MCF 10A (cell line): ENCODE measurements at regions of chrX and their contacts with region 1.

Region 1: DNA sequence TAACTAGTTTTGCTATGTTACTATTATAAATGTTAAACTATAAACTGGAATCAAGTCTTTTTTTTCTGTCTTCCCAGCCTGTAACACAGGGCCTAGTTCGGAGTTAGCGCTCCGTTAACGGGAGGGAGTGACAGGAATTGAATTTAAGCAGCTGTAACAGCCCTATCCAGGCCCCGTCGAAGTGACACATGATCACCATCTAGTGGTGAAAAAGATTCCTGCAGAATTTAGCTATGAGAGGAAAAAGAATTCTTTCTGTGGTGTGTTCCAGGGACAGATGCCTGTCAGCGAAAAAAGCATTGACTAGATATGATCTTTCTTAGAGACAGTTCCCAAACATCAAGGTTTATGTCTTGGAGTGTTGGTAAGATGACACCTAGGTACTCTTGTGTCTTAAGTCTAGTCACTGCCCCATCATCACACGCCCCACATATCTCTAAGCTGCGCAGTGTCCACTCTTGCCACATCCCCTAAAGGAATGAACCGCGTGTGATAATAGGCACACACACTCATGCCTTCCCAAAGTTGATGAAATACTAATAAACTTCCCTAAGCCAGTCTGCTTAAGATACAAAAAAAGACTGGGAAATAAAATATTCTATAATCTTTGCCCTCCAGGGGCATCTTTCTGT is 2.0 kb downstream of the GAB3 start:
- DNase-seq: peak; percentile 79
- H3K4me3 Mint-ChIP-seq: no peak overlapping the region
- H3K27ac Mint-ChIP-seq: no peak overlapping the region
- H3K4me1 Mint-ChIP-seq: no peaks in the 10 kb centered on the region
- H3K27me3 Mint-ChIP-seq: peaks cover 14% of the 10 kb centered on the region
- CTCF ChIP-seq: peak; percentile 77

Region 2: GRCh38 chrX:154714925-154715324 is 33.9 kb before region 1 on chrX:
- CTCF ChIA-PET with region 1: interaction called, 31 read pairs
- POLR2A ChIA-PET with region 1: interaction called, 24 read pairs
- intact Hi-C with region 1: loop called (anchors 1 kb)
- DNase-seq: peak; percentile 80
- H3K4me3 Mint-ChIP-seq: no peak overlapping the region
- H3K27ac Mint-ChIP-seq: no peak overlapping the region
- H3K4me1 Mint-ChIP-seq: peaks cover 42% of the 10 kb centered on the region
- H3K27me3 Mint-ChIP-seq: no peaks in the 10 kb centered on the region
- CTCF ChIP-seq: peak; percentile 79

Region 3: DNA sequence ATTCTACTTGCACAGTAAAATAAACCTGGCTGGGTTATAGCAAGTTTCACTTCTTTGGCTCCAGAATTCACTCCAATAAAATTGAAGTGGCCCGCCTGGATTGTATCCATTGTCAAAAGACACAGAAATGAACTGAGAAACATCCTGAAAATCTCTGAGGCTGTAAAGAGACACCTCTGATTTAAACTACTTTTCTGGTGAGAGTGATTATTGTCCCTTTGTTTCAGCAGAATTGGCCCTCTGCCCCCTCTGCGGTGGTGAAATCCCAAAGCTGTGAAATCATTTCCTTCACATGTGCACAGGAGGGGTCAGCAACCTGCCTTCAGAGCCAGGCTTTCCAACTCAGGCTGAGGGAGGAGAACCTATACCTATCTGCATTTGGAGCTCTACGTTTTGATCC is 21.0 kb before region 1 on chrX:
- CTCF ChIA-PET with region 1: interaction called, 62 read pairs
- POLR2A ChIA-PET with region 1: interaction called, 37 read pairs
- intact Hi-C with region 1: loop called (anchors 1 kb)
- DNase-seq: peak; percentile 90
- H3K4me3 Mint-ChIP-seq: peak overlapping the region; percentile 32
- H3K27ac Mint-ChIP-seq: peak overlapping the region; percentile 83
- H3K4me1 Mint-ChIP-seq: peaks cover 85% of the 10 kb centered on the region
- H3K27me3 Mint-ChIP-seq: no peaks in the 10 kb centered on the region
- CTCF ChIP-seq: no peak

Region 4: DNA sequence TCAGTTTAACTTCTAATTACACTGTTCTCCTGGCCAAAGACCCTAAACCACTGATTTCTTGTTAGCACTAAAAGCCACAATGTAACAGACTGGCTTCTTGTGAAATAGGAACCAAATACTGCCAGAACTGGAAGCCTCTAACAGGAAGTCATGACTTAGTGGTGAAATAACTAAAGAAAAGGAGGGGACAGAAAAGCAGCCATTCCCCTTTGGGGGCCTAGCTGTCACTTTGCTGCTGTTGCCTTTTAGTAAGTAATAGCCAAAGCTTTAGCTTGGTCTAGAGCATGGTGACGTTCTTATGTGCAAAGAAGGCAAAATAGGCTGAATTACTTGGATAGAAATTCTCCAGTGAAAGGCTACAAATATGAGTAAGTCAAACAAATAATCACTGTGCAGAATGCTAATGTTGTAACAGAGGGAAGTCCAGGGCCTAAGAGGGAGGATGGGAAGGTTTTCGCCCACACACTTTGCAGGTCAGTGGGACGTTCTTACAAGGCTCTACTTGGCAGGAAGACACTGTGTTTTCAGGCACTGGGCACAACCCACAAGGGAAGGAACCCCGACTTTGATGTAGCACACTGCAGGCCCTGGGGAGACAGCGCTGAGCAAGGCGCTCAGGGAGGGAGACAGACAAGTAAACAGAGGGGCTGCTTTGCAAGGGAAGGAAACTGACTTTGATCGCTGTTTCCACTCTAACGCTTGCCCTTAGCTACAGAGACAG is 14.6 kb before region 1 on chrX:
- CTCF ChIA-PET with region 1: interaction called, 62 read pairs
- POLR2A ChIA-PET with region 1: interaction called, 37 read pairs
- intact Hi-C with region 1: no loop called
- DNase-seq: peak; percentile 89
- H3K4me3 Mint-ChIP-seq: peak overlapping the region; percentile 12
- H3K27ac Mint-ChIP-seq: peak overlapping the region; percentile 77
- H3K4me1 Mint-ChIP-seq: peaks cover 89% of the 10 kb centered on the region
- H3K27me3 Mint-ChIP-seq: no peaks in the 10 kb centered on the region
- CTCF ChIP-seq: no peak

Region 5: DNA sequence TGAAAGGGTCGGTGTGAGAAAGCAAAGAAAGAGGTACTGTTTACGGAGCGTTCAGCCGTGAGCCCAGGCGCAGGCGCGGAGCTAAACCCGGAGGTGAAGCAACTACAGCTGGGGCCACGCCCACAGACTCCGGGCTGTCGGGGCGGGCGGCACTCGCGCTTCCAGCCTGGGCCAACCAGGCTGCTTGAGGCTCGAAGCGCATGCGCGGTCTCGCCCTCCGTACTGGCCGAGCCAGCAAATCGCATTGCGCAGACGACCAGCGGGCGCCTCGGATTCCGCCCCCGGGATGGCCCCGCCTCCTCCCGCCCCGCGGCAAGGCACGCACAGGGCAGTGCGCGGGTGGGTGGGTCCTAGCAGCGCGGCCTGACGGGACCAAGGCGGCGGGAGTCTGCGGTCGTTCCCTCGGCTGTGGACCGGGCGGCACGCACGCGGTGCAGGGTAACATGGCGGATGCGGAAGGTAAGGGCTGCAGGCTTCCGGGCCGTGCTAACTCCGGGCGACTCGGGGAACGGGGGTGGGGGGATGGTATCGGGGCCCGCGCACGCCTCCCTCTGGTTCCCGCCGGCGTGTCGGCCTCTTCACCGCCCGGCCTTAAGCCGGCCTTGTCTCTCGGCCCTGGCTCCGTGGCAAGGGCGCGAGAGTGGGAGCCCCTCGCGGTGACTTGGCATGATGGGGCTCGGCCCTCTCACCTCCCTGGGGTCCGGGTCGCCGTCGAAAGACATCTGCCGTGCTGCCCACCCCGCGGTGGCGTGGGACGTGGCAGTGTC is 13.9 kb after region 1 on chrX and contains the start of gene DKC1:
- CTCF ChIA-PET with region 1: interaction called, 17 read pairs
- POLR2A ChIA-PET with region 1: interaction called, 18 read pairs
- intact Hi-C with region 1: no loop called
- DNase-seq: peak; percentile 92
- H3K4me3 Mint-ChIP-seq: peak within 1 kb of the TSS; percentile 79
- H3K27ac Mint-ChIP-seq: peak within 1 kb of the TSS; percentile 79
- H3K4me1 Mint-ChIP-seq: peaks cover 6% of the 10 kb centered on the region
- H3K27me3 Mint-ChIP-seq: peaks cover 13% of the 10 kb centered on the region
- CTCF ChIP-seq: no peak
- total RNA-seq, gene DKC1: 149 and 196 TPM in 2 replicates

Region 6: DNA sequence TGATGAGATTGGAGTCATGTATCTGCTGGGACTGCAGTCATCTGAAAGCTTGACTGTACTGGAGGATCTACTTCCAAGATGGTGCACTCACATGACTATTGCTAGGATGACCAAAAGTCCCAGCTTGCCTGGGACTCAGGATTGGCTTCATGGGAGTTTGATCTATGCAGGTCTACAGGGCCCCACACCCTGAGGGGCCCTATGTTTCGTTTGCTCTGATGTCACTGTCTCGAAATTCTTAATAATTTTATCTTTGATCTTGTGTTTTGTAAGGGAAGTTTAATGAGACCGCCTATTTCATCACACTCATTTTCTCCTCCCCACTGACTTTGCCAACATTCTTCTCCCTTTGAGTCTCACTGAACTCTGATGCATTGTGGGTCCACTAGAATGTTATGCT is 85.8 kb after region 1 on chrX and contains the start of gene SMIM9:
- CTCF ChIA-PET with region 1: interaction called, 26 read pairs
- POLR2A ChIA-PET with region 1: no interaction called
- intact Hi-C with region 1: no loop called
- DNase-seq: no peak
- H3K4me3 Mint-ChIP-seq: no peak within 1 kb of the TSS
- H3K27ac Mint-ChIP-seq: no peak within 1 kb of the TSS
- H3K4me1 Mint-ChIP-seq: no peaks in the 10 kb centered on the region
- H3K27me3 Mint-ChIP-seq: peaks cover 60% of the 10 kb centered on the region
- CTCF ChIP-seq: no peak
- total RNA-seq, gene SMIM9: not detected in 2 replicates

Region 7: GRCh38 chrX:154840856-154841255 is 92.0 kb after region 1 on chrX:
- CTCF ChIA-PET with region 1: interaction called, 26 read pairs
- POLR2A ChIA-PET with region 1: no interaction called
- intact Hi-C with region 1: loop called (anchors 1 kb)
- DNase-seq: peak; percentile 63
- H3K4me3 Mint-ChIP-seq: no peak overlapping the region
- H3K27ac Mint-ChIP-seq: no peak overlapping the region
- H3K4me1 Mint-ChIP-seq: no peaks in the 10 kb centered on the region
- H3K27me3 Mint-ChIP-seq: peaks cover 42% of the 10 kb centered on the region
- CTCF ChIP-seq: peak; percentile 51